Kidney (tissue), 22 donors: ENCODE measurements at regions of chr15 and their contacts with region 1.

Region 1: DNA sequence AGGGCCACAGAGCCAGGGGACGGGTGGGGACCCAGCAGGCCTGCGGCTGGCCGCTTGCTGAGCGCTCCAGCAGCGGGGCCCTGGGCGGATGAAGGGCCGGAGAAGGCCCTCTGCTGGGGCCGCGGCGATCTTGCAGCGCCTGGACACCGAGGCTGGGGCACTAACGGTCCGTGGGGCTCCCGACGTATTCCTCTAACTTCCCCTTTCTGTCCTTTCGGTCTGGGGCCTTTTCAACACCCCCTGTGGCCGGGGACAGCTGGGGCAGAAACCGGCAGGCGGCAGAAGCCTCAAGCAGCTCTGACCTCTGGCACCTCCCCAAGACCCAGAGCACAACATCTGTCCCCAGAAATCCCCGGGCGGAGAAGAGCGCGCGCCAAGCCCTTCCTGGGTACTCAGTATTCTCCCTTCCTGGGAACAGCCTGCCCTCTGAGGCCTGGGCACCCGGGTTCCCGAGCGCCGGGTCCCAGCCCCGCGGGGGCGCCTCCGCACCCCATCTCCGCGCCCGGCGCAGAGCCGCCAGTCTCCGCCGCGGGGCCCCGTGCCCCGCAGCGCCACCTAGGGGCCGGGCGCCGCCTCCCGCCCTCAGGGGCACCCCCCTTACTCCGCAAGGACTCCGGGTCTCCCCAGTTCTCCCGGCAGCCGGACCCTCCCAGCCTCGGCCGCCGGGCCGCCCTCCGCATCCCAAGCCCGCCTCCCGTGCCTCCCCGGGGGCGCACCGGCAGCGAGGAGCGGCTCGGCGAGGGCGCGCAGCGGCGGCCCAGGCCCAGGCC is 582 bp upstream of the SLCO3A1 start:
- DNase-seq: peak; percentile 55 to 93 (median 70)
- H3K4me3 ChIP-seq: peak overlapping the region; percentile 30 to 60 (median 52)
- H3K27ac ChIP-seq: peak overlapping the region; percentile 68 to 76
- H3K4me1 ChIP-seq: peaks cover 0 to 9% (median 0%) of the 10 kb centered on the region in 3 donors
- H3K27me3 ChIP-seq: no peaks in the 10 kb centered on the region
- CTCF ChIP-seq: peak; percentile 36

Region 2: GRCh38 chr15:91981821-91982801 is 129.2 kb after region 1 on chr15:
- intact Hi-C with region 1: loop called (anchors 10 kb)
- DNase-seq: no peak
- H3K4me3 ChIP-seq: no peak overlapping the region
- H3K27ac ChIP-seq: no peak overlapping the region
- H3K4me1 ChIP-seq: no peaks in the 10 kb centered on the region
- H3K27me3 ChIP-seq: no peaks in the 10 kb centered on the region
- CTCF ChIP-seq: no peak